Naive thymus-derived CD4-positive, alpha-beta T cell (primary cell): ENCODE measurements at regions of chr1 and their contacts with region 1.

Region 1: DNA sequence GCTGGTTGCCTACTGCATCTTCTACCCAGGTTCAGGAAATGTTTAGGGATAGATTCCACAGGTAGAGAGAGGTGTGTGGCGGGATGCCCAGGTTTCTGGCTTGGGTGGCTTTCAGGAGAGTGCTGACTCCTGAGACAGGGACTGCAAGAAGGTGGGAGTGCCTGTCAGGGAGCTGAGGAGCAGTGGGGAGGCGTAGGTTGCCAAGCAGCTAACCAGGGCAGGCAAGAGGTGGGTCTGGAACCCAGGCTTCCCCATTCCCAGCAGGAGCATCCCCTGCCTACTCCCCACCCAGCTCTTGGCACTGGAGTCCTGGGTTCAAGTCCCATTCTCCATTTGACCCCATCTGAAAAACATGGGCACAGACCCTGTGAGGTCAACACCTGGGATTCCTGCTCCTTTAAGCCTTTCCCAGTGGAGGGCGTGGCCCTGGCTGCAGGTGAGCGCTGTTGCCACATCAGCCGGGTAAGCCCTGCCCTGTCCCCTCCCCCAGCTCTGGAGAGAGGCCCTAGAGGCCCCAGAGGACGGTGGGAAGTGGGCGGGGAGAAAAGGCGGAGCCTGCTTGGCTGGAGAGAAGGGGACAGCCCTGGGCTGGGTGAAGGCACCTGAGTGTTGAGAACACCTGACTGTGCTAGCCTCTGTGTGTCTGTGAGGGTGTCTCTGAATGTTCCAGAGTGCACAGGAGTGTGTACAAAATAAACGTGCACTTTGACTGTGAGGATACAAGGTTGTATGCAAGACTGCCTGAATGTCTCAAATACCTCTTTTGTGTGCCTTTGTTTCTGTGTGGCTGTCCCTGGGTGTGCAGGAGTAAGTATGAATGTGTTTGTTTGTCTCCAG is 14.0 kb upstream of the SYNC start:
- DNase-seq: peak in 6 of 9 donors; percentile 18 to 67 (median 28)
- ATAC-seq: peak; percentile 25
- H3K4me3 ChIP-seq: no peak overlapping the region
- H3K4me3 Mint-ChIP-seq: peak overlapping the region in 1 of 10 donors; percentile 30
- H3K27ac ChIP-seq: no peak overlapping the region
- H3K27ac Mint-ChIP-seq: peak overlapping the region in 3 of 9 donors; percentile 13 to 47 (median 41)
- H3K4me1 ChIP-seq: peaks cover 0 to 5% of the 10 kb centered on the region in 2 donors
- H3K4me1 Mint-ChIP-seq: peaks cover 0 to 15% (median 14%) of the 10 kb centered on the region in 7 donors
- H3K27me3 ChIP-seq: no peaks in the 10 kb centered on the region
- H3K27me3 Mint-ChIP-seq: peaks cover 0 to 6% (median 0%) of the 10 kb centered on the region in 5 donors

Region 2: DNA sequence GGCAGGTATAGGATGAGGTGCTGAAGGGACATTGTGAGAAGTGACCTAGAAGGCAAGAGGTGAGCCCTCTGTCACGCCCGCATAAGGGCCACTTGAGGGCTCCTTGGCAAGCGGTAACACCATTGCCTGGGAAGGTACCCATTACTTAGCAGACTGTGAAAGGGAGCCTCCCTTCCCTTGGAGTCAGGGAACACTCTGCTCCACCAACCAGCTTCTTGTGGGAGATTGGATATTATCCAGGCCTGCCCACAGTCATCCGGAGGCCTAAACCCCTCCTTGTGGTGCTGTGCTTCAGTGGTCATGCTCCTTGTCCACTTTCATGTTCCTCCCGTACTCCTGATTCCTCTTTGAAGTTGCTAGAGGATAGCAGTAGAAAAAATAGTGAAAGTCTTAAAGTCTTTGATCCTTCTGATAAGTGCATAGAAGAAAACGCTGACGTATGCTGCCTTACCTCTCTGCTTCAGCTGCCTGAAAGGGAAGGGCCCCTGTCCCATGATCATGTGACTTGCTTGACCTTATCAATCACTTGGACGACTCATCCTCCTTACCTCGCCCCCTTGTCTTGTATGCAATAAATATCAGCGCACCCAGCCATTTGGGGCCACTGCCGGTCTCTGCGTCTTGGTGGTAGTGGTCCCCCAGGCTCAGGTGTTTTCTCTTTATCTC is 49.5 kb before region 1 on chr1:
- CTCF ChIA-PET with region 1: no interaction called
- POLR2A ChIA-PET with region 1: no interaction called
- intact Hi-C with region 1: no loop called
- DNase-seq: no peak
- ATAC-seq: no peak
- H3K4me3 ChIP-seq: no peak overlapping the region
- H3K4me3 Mint-ChIP-seq: no peak overlapping the region
- H3K27ac ChIP-seq: no peak overlapping the region
- H3K27ac Mint-ChIP-seq: peak overlapping the region in 1 of 9 donors; percentile 15
- H3K4me1 ChIP-seq: no peaks in the 10 kb centered on the region
- H3K4me1 Mint-ChIP-seq: peaks cover 0 to 14% (median 4%) of the 10 kb centered on the region in 7 donors
- H3K27me3 ChIP-seq: no peaks in the 10 kb centered on the region
- H3K27me3 Mint-ChIP-seq: no peaks in the 10 kb centered on the region

Region 3: GRCh38 chr1:32753532-32754312 is 37.2 kb after region 1 on chr1:
- CTCF ChIA-PET with region 1: no interaction called
- POLR2A ChIA-PET with region 1: no interaction called
- intact Hi-C with region 1: loop called (anchors 5 kb)
- DNase-seq: peak; percentile 51 to 81 (median 66)
- ATAC-seq: peak; percentile 90
- H3K4me3 ChIP-seq: peak overlapping the region; percentile 65
- H3K4me3 Mint-ChIP-seq: peak overlapping the region; percentile 75 to 91 (median 82)
- H3K27ac ChIP-seq: peak overlapping the region; percentile 39
- H3K27ac Mint-ChIP-seq: peak overlapping the region in 7 of 9 donors; percentile 70 to 91 (median 83)
- H3K4me1 ChIP-seq: peaks cover under 1 to 4% of the 10 kb centered on the region in 2 donors
- H3K4me1 Mint-ChIP-seq: peaks cover 0 to 29% (median 17%) of the 10 kb centered on the region in 7 donors
- H3K27me3 ChIP-seq: no peaks in the 10 kb centered on the region
- H3K27me3 Mint-ChIP-seq: peaks cover 0 to 53% (median 4%) of the 10 kb centered on the region in 5 donors

Region 4: DNA sequence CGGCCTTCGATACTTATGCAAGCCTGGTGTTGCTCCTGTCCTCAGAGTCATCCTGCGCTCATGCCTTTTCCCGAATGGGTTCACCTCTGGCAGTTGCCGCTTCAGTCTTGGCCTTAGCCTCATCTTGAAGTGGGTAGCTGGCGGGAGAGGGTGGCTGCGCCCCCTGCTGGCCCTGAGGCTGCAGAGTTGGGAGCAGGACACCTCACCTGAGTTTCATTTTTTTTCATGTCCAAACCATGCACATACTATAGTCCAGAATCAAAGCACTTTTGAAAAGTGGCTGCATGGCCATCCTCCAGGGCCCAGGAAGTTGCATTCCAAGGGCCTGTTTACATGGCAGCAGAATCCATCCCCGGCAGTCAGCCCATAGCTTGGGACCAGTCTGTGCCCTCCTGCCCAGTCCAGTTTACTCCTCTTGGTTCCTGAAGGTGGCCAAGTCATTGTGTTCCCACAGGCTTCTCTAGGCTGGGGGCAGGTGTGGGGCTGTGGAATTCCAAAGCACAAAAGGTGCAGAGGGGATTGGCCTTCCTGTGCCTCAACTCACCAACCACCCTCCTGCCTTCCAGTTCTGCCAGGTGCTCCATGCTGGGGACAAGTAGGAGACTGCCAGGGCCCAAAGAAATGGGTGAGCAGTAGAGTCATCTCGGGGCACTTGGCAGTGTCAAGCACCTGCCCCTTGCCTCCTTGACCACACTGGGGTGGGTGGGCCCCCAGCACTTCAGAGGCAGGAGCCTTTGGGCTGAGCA is 56.7 kb after region 1 on chr1:
- CTCF ChIA-PET with region 1: interaction called, 71 read pairs
- POLR2A ChIA-PET with region 1: no interaction called
- intact Hi-C with region 1: loop called (anchors 1 kb)
- DNase-seq: peak; percentile 52 to 77 (median 67)
- ATAC-seq: peak; percentile 84
- H3K4me3 ChIP-seq: no peak overlapping the region
- H3K4me3 Mint-ChIP-seq: no peak overlapping the region
- H3K27ac ChIP-seq: peak overlapping the region; percentile 24
- H3K27ac Mint-ChIP-seq: peak overlapping the region in 4 of 9 donors; percentile 10 to 77 (median 42)
- H3K4me1 ChIP-seq: no peaks in the 10 kb centered on the region
- H3K4me1 Mint-ChIP-seq: peaks cover 0 to 24% (median 6%) of the 10 kb centered on the region in 7 donors
- H3K27me3 ChIP-seq: no peaks in the 10 kb centered on the region
- H3K27me3 Mint-ChIP-seq: no peaks in the 10 kb centered on the region

Region 5: GRCh38 chr1:32870615-32871363 is 154.3 kb after region 1 on chr1 and contains the start of gene FNDC5:
- CTCF ChIA-PET with region 1: interaction called, 10 read pairs
- POLR2A ChIA-PET with region 1: no interaction called
- intact Hi-C with region 1: loop called in 1 of 2 experiments (anchors 1 kb)
- DNase-seq: no peak
- ATAC-seq: peak; percentile 14
- H3K4me3 ChIP-seq: no peak within 1 kb of the TSS
- H3K4me3 Mint-ChIP-seq: peak within 1 kb of the TSS; percentile 51 to 83 (median 68)
- H3K27ac ChIP-seq: no peak within 1 kb of the TSS
- H3K27ac Mint-ChIP-seq: no peak within 1 kb of the TSS
- H3K4me1 ChIP-seq: peaks cover 0 to 11% of the 10 kb centered on the region in 2 donors
- H3K4me1 Mint-ChIP-seq: peaks cover 11 to 28% (median 17%) of the 10 kb centered on the region in 7 donors
- H3K27me3 ChIP-seq: peaks cover 3 to 15% of the 10 kb centered on the region in 2 donors
- H3K27me3 Mint-ChIP-seq: peaks cover 44 to 60% (median 53%) of the 10 kb centered on the region in 5 donors
- total RNA-seq, gene FNDC5: not detected

Region 6: DNA sequence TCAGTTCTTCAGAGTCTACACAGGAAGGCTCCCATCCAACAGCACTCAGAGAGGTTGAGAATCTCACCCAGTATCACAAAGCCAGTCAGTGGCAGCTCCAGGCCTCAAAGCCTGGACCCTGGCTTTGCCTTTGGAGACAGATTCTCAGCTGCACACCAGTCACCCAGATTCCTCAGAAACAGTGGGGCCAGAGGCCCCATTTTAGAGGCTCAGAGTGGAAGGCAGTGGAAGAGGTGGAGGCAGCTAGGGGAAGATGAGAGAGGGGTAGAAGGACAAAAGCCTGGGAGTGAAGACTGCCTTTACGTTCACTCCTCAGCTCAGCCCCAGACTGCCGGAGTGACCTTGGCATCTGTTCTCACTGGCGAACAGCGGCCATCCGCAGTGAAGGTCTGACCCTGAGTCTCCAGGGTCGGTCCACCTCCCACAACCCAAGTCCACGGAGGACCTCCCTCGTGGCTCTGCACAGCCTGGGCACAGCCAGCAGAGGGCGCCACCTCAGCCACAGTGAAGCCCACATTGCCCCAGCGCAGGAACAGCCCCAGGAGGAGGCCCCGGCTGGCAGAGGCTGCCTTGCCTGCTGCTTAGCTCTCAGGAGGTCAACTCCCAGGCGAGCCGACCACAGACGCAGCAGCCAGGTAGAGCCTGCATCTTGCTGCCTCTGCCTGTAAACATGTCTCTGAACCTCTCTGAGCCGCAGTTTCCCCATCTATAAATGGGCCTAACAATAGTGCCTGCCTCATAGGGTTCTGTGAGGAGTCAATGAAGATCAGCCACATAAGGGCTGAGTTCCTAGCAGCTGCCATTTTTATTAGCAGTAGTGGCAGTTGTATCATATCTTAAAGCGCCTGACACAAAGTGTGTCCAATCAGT is 160.0 kb after region 1 on chr1:
- CTCF ChIA-PET with region 1: interaction called, 10 read pairs
- POLR2A ChIA-PET with region 1: no interaction called
- intact Hi-C with region 1: loop called (anchors 1 kb)
- DNase-seq: peak; percentile 22 to 76 (median 39)
- ATAC-seq: peak; percentile 88
- H3K4me3 ChIP-seq: no peak overlapping the region
- H3K4me3 Mint-ChIP-seq: no peak overlapping the region
- H3K27ac ChIP-seq: no peak overlapping the region
- H3K27ac Mint-ChIP-seq: no peak overlapping the region
- H3K4me1 ChIP-seq: peaks cover 0 to 2% of the 10 kb centered on the region in 2 donors
- H3K4me1 Mint-ChIP-seq: peaks cover 0 to 12% (median 3%) of the 10 kb centered on the region in 7 donors
- H3K27me3 ChIP-seq: peaks cover 3 to 7% of the 10 kb centered on the region in 2 donors
- H3K27me3 Mint-ChIP-seq: peaks cover 36 to 45% (median 37%) of the 10 kb centered on the region in 5 donors